Right ventricle myocardium superior (tissue), 1 donor: ENCODE measurements at regions of chr19 and their contacts with region 1.

Region 1: DNA sequence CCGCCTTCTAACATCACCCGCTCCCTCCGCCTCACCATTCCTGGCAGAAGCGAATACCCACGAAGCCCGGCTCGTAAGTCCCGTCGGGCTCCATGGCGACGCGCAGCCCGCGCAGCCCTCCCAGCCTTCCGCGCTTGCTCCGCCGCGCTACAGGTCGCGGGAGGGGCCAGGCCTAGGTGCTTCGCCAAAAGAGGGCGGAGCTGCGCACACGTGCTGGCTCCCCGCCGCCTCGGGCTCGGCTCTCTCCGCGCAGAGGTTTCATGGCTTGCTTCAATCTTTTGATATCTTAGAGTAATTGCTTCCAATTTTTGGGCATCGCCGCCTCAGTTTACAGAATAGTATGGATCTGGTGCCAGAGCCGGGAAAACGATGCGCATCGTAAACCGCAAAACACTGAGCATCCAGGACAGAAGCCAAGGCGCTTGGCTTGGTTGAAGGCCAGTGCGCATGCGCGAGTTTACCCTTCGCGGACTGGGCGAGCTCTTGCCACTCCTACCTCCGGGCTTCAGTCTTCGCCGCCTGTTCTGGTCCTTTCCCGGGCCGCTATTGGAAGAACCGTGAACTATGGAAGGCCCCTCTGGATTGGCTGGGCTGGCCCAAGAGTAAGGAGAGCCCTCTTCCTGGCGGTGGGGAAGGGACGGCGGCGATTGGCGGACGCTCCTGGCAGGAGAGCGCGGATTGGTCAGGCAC is at the start of gene POLR2I:
- DNase-seq: peak; percentile 99
- ATAC-seq: peak; percentile 92
- total RNA-seq, gene POLR2I: 145 TPM

Region 2: DNA sequence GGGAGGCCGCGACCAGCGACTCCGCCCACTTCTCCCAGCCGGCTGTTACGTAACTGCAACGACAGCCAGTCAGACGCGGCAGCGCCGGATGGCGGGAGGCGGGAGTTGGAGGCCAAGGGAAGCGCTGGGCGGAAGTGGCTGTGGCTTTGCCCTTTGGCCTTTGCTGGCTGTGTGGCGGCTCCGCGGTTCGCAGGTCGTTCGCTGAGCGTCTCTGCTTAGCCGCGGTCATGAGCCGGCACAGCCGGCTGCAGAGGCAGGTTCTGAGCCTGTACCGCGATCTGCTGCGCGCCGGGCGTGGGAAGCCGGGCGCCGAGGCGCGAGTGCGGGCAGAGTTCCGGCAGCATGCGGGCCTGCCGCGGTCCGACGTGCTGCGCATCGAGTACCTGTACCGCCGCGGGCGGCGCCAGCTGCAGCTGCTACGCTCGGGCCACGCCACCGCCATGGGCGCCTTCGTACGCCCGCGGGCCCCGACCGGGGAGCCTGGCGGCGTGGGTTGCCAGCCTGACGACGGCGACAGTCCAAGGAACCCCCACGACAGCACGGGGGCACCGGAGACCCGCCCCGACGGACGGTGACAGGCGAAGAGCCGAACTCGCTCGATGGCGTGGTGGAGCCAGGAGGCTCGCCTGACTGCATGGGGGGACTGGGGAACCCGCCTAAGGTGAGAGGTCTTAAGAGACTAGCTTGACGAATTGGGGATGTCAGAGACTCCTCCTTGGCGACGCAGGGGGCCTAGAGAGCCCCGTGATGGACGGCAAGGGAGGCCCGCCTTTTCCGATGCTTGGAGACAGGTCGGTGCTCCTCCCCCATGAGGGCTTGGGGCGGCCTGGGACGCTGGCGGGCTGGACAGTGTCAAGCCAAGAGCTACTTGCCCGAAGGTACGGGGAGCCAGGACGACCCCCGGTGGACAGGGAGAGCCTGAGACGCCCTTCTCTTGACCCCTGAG is 119.6 kb before region 1 on chr19 and contains the start of gene SDHAF1:
- intact Hi-C with region 1: loop called (anchors 5 kb)
- DNase-seq: peak; percentile 99
- ATAC-seq: peak; percentile 98
- total RNA-seq, gene SDHAF1: 10.2 TPM

Region 3: GRCh38 chr19:36054119-36054732 is 60.7 kb before region 1 on chr19 and contains the start of gene THAP8:
- intact Hi-C with region 1: loop called (anchors 2 kb)
- DNase-seq: peak; percentile 100
- ATAC-seq: peak; percentile 97
- total RNA-seq, gene THAP8: 4.2 TPM

Region 4: GRCh38 chr19:36152352-36153091 is 37.6 kb after region 1 on chr19 and contains the start of gene COX7A1:
- intact Hi-C with region 1: no loop called
- DNase-seq: peak; percentile 89
- ATAC-seq: peak; percentile 92
- total RNA-seq, gene COX7A1: 3,311 TPM